ENCODE measurements at regions of chr1 and their contacts with region 1.

Region 1: GRCh38 chr1:145978854-145979759 is 14.6 kb downstream of the POLR3GL start:
- ATAC-seq: peak; percentile 89 to 98 (median 96)
- H3K4me3 ChIP-seq: peak overlapping the region in 4 of 5 donors; percentile 6 to 20 (median 14)
- H3K27ac ChIP-seq: peak overlapping the region; percentile 90 to 94
- H3K4me1 ChIP-seq: peaks cover 28 to 32% of the 10 kb centered on the region in 2 donors

Region 2: GRCh38 chr1:145918144-145918992 is 60.7 kb before region 1 on chr1 and contains the start of gene PEX11B:
- in situ Hi-C with region 1: loop called in 2 of 9 experiments (anchors 10 kb)
- ATAC-seq: peak; percentile 87 to 94 (median 90)
- H3K4me3 ChIP-seq: peak within 1 kb of the TSS; percentile 43 to 69 (median 61)
- H3K27ac ChIP-seq: peak within 1 kb of the TSS; percentile 62 to 75
- H3K4me1 ChIP-seq: peaks cover 15 to 19% of the 10 kb centered on the region in 2 donors
- total RNA-seq, gene PEX11B: 16.6 to 31.0 (median 23.8) TPM

Measured in motor neuron (in vitro differentiated cells).